Activated CD4-positive, alpha-beta memory T cell treated with anti-CD3 and anti-CD28 coated beads, Interleukin-2, amount 10 ng/mL, durations not matched to agents 7 days and 5 days (primary cell): ENCODE measurements at regions of chr12 and their contacts with region 1.

Region 1: GRCh38 chr12:68102163-68102562 is 57.4 kb downstream of the IFNG start:
- DNase-seq: no peak
- H3K4me3 Mint-ChIP-seq: no peak overlapping the region
- H3K27ac Mint-ChIP-seq: no peak overlapping the region
- H3K4me1 Mint-ChIP-seq: no peaks in the 10 kb centered on the region
- H3K27me3 Mint-ChIP-seq: peaks cover 9% of the 10 kb centered on the region

Region 2: GRCh38 chr12:67940780-67941243 is 161.4 kb before region 1 on chr12:
- CTCF ChIA-PET with region 1: no interaction called
- POLR2A ChIA-PET with region 1: no interaction called
- DNase-seq: no peak
- H3K4me3 Mint-ChIP-seq: no peak overlapping the region
- H3K27ac Mint-ChIP-seq: no peak overlapping the region
- H3K4me1 Mint-ChIP-seq: no peaks in the 10 kb centered on the region
- H3K27me3 Mint-ChIP-seq: peaks cover 7% of the 10 kb centered on the region

Region 3: GRCh38 chr12:68089101-68089500 is 13.1 kb before region 1 on chr12:
- CTCF ChIA-PET with region 1: no interaction called
- POLR2A ChIA-PET with region 1: no interaction called
- DNase-seq: no peak
- H3K4me3 Mint-ChIP-seq: no peak overlapping the region
- H3K27ac Mint-ChIP-seq: no peak overlapping the region
- H3K4me1 Mint-ChIP-seq: no peaks in the 10 kb centered on the region
- H3K27me3 Mint-ChIP-seq: peaks cover 2% of the 10 kb centered on the region

Region 4: DNA sequence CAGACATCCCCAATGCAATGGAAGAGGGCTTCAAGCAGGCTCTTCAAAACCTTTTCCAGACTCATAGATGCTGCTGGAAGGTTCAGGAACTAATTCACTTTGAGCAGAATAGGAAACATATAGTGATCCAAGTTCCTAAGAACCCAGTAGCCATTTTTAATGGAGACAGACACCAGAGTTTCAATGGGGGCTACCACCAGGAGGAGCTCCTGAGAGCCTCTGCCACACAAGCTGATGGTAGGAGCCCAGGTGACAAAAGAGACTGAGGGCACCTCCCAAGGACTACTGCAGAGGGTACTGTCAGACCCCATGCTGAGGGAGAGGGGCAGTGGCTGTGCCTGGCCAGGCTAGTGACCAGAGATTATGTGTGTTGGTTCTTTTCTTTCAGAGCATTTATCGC is 11.5 kb after region 1 on chr12:
- CTCF ChIA-PET with region 1: interaction called, 16 read pairs
- POLR2A ChIA-PET with region 1: no interaction called
- DNase-seq: peak; percentile 64
- H3K4me3 Mint-ChIP-seq: no peak overlapping the region
- H3K27ac Mint-ChIP-seq: no peak overlapping the region
- H3K4me1 Mint-ChIP-seq: peaks cover 39% of the 10 kb centered on the region
- H3K27me3 Mint-ChIP-seq: no peaks in the 10 kb centered on the region

Region 5: DNA sequence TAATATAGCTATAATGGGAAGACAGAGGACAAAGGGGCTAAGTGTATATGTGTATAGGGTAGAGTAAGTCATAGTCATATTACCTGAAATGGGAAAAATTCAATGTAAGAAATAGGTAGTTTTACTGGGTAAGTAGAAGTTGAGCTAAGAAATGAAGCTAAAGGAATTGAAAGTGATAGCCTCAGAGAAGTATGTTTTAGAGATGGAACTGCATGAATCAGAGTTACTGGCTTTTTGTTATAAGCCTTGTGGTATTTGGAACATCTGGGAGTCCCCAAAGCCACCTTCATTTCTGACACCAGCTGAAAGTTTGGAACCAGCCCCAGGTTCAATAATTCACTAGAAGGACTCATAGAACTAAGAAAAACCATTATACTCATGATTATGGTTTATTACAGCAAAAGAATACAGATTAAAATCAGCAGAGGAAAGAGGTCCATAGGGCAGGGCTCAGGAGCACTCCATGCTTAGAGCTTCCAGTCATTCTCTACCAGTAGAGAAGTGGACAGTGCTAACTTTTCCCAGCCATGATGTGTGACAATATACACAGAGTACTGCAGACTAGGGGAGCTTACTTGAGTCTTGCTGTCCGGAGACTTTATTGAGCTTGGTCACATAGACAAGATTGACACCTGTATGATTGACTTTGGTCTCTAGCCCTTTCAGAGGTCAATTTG is 67.2 kb after region 1 on chr12:
- CTCF ChIA-PET with region 1: no interaction called
- POLR2A ChIA-PET with region 1: no interaction called
- DNase-seq: no peak
- H3K4me3 Mint-ChIP-seq: no peak overlapping the region
- H3K27ac Mint-ChIP-seq: no peak overlapping the region
- H3K4me1 Mint-ChIP-seq: peaks cover 3% of the 10 kb centered on the region
- H3K27me3 Mint-ChIP-seq: peaks cover 2% of the 10 kb centered on the region